ENCODE measurements at regions of chr5 and their contacts with region 1.

Region 1: DNA sequence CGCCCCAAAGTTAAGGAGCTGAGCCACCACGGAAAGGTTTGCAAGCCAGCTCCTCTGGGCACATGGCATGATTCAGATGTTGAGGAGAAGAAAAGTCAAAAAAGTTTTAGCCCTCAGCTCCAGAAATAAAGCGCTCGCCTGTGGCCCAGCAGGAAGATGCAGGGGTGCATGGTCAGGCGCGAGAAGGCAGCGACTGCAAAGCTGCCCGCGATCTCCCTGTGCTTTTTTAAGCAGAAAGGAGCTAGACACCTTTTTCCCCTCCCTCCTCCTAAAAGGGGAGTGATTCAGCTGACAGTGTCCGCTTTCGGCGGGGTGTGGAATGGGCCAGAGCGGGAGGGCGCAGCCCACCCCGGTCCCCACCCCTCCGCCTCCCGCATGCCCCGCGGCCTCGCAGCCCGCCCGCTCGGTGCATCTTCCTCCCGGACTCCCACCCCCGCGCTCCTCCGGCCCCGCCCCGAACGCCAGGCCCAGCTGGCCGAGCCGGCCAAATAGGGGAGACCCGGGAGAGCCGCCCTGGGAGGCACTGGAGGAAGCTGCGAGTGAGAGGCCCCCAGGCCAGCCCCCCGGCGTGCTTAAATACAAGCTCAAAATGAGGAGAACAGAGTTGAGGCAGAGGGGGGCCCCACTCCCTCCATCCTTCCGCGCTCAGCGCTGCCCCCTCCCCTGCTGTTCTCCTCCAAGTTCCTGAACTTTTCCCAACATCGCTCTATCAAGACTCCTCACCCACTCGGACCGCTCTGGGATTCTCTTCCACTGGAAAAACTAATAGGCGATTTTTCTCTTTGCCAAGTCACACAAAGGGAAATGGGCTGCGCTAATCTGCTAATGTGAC is at the start of gene ADAMTS12:
- DNase-seq: peak; percentile 41 to 70
- ATAC-seq: peak; percentile 67 to 89 (median 80)
- H3K4me3 ChIP-seq: peak within 1 kb of the TSS; percentile 14 to 60 (median 52)
- H3K27ac ChIP-seq: peak within 1 kb of the TSS in 9 of 10 donors; percentile 15 to 71 (median 50)
- H3K4me1 ChIP-seq: peaks cover 0 to 21% (median 9%) of the 10 kb centered on the region in 9 donors
- H3K27me3 ChIP-seq: peaks cover 0 to 54% (median 40%) of the 10 kb centered on the region in 7 donors
- CTCF ChIP-seq: no peak
- total RNA-seq, gene ADAMTS12: 1.1 to 3.7 (median 1.4) TPM

Region 2: GRCh38 chr5:33781286-33781685 is 110.7 kb before region 1 on chr5:
- intact Hi-C with region 1: loop called in 1 of 10 experiments (anchors 10 kb)
- DNase-seq: no peak
- ATAC-seq: peak in 5 of 8 donors; percentile 46 to 84 (median 56)
- H3K4me3 ChIP-seq: no peak overlapping the region
- H3K27ac ChIP-seq: peak overlapping the region in 3 of 10 donors; percentile 13 to 16 (median 15)
- H3K4me1 ChIP-seq: peaks cover 0 to 11% (median 0%) of the 10 kb centered on the region in 9 donors
- H3K27me3 ChIP-seq: no peaks in the 10 kb centered on the region
- CTCF ChIP-seq: no peak

Region 3: GRCh38 chr5:33832404-33833236 is 59.4 kb before region 1 on chr5:
- intact Hi-C with region 1: loop called in 1 of 10 experiments (anchors 10 kb)
- DNase-seq: no peak
- ATAC-seq: no peak
- H3K4me3 ChIP-seq: no peak overlapping the region
- H3K27ac ChIP-seq: no peak overlapping the region
- H3K4me1 ChIP-seq: peaks cover 0 to 11% (median 0%) of the 10 kb centered on the region in 9 donors
- H3K27me3 ChIP-seq: no peaks in the 10 kb centered on the region
- CTCF ChIP-seq: no peak